MCF 10A (cell line): ENCODE measurements at regions of chr12 and their contacts with region 1.

Region 1: GRCh38 chr12:95700316-95700785 is 90.2 kb downstream of the NTN4 start:
- DNase-seq: peak; percentile 89
- H3K4me3 Mint-ChIP-seq: peak overlapping the region; percentile 48
- H3K27ac Mint-ChIP-seq: peak overlapping the region; percentile 92
- H3K4me1 Mint-ChIP-seq: peaks cover 14% of the 10 kb centered on the region
- H3K27me3 Mint-ChIP-seq: no peaks in the 10 kb centered on the region
- CTCF ChIP-seq: no peak

Region 2: GRCh38 chr12:95380997-95381786 is 319.2 kb before region 1 on chr12:
- CTCF ChIA-PET with region 1: no interaction called
- POLR2A ChIA-PET with region 1: no interaction called
- intact Hi-C with region 1: no loop called
- DNase-seq: no peak
- H3K4me3 Mint-ChIP-seq: no peak overlapping the region
- H3K27ac Mint-ChIP-seq: no peak overlapping the region
- H3K4me1 Mint-ChIP-seq: peaks cover 16% of the 10 kb centered on the region
- H3K27me3 Mint-ChIP-seq: no peaks in the 10 kb centered on the region
- CTCF ChIP-seq: no peak

Region 3: GRCh38 chr12:95582230-95583058 is 117.9 kb before region 1 on chr12:
- CTCF ChIA-PET with region 1: no interaction called
- POLR2A ChIA-PET with region 1: no interaction called
- intact Hi-C with region 1: loop called (anchors 10 kb)
- DNase-seq: peak; percentile 51
- H3K4me3 Mint-ChIP-seq: no peak overlapping the region
- H3K27ac Mint-ChIP-seq: no peak overlapping the region
- H3K4me1 Mint-ChIP-seq: no peaks in the 10 kb centered on the region
- H3K27me3 Mint-ChIP-seq: no peaks in the 10 kb centered on the region
- CTCF ChIP-seq: peak; percentile 54

Region 4: GRCh38 chr12:95633049-95633545 is 67.3 kb before region 1 on chr12:
- CTCF ChIA-PET with region 1: no interaction called
- POLR2A ChIA-PET with region 1: no interaction called
- intact Hi-C with region 1: loop called (anchors 1 kb)
- DNase-seq: peak; percentile 98
- H3K4me3 Mint-ChIP-seq: peak overlapping the region; percentile 41
- H3K27ac Mint-ChIP-seq: peak overlapping the region; percentile 91
- H3K4me1 Mint-ChIP-seq: peaks cover 28% of the 10 kb centered on the region
- H3K27me3 Mint-ChIP-seq: no peaks in the 10 kb centered on the region
- CTCF ChIP-seq: no peak

Region 5: DNA sequence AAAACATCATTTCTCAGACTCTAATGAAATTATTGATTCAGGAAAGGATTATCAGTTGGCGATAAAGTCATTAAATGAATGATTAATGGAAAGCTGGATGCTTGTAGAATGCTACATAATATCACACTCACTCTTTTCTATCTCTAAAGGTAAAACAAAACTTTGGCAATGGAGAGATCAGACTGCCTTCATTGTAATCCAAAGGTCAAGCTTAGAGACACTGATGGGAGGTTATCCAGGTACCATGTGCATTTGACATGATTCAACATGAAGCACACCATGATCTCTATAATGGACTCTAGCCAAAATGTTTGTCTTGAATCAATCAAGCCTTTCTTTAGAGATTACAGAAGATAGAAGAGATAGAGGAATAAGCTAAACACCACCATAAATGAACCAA is 39.0 kb before region 1 on chr12:
- CTCF ChIA-PET with region 1: interaction called, 3 read pairs
- POLR2A ChIA-PET with region 1: interaction called, 3 read pairs
- intact Hi-C with region 1: loop called (anchors 2 kb)
- DNase-seq: no peak
- H3K4me3 Mint-ChIP-seq: no peak overlapping the region
- H3K27ac Mint-ChIP-seq: no peak overlapping the region
- H3K4me1 Mint-ChIP-seq: no peaks in the 10 kb centered on the region
- H3K27me3 Mint-ChIP-seq: no peaks in the 10 kb centered on the region
- CTCF ChIP-seq: no peak

Region 6: DNA sequence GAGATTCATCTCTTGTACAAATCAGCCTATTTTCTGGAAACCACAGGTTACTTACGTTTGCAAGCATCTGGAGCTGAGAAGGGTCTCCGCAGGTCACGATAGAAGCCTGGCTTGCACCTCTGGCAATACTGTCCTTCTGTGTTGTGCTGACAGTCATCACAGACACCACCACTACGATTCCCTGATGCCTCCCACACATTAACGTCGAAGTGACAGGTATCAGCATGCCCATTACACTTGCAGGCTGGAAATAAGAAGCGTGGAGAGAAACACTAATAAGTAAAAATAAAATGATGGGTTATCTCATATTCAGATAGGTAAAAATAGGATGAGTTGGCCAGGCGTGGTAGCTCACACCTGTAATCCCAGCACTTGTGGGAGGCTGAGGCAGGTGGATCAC is 10.0 kb after region 1 on chr12:
- CTCF ChIA-PET with region 1: no interaction called
- POLR2A ChIA-PET with region 1: no interaction called
- intact Hi-C with region 1: no loop called
- DNase-seq: no peak
- H3K4me3 Mint-ChIP-seq: no peak overlapping the region
- H3K27ac Mint-ChIP-seq: no peak overlapping the region
- H3K4me1 Mint-ChIP-seq: no peaks in the 10 kb centered on the region
- H3K27me3 Mint-ChIP-seq: no peaks in the 10 kb centered on the region
- CTCF ChIP-seq: no peak

Region 7: GRCh38 chr12:95790033-95790911 is 89.9 kb after region 1 on chr12 and contains the start of gene NTN4:
- CTCF ChIA-PET with region 1: interaction called, 3 read pairs
- POLR2A ChIA-PET with region 1: no interaction called
- intact Hi-C with region 1: loop called (anchors 2 kb)
- DNase-seq: peak; percentile 49
- H3K4me3 Mint-ChIP-seq: peak within 1 kb of the TSS; percentile 80
- H3K27ac Mint-ChIP-seq: peak within 1 kb of the TSS; percentile 83
- H3K4me1 Mint-ChIP-seq: no peaks in the 10 kb centered on the region
- H3K27me3 Mint-ChIP-seq: no peaks in the 10 kb centered on the region
- CTCF ChIP-seq: no peak
- total RNA-seq, gene NTN4: 53.0 and 96.4 TPM in 2 replicates

Region 8: DNA sequence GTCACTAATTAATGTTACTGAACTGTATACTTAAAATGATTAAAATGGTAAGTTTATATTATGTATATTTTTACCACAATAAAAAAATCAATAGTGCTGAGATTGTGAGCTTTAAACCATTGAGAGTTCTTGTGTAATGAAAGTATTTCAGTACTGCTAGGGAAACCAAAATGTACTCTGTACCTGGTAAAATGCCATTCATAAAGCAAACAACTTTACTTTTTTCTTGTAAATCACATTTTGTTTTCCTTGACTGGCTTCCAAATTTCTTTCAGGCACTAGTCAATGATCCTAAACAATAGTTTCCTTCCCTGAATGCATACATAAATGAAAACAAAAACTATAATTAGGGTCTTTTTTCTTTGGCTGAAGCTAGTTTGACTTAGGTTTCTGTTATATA is 129.0 kb after region 1 on chr12:
- CTCF ChIA-PET with region 1: no interaction called
- POLR2A ChIA-PET with region 1: no interaction called
- intact Hi-C with region 1: no loop called
- DNase-seq: no peak
- H3K4me3 Mint-ChIP-seq: no peak overlapping the region
- H3K27ac Mint-ChIP-seq: no peak overlapping the region
- H3K4me1 Mint-ChIP-seq: no peaks in the 10 kb centered on the region
- H3K27me3 Mint-ChIP-seq: peaks cover 28% of the 10 kb centered on the region
- CTCF ChIP-seq: no peak